GM12878 (cell line): ENCODE measurements at regions of chr14 and their contacts with region 1.

Region 1: DNA sequence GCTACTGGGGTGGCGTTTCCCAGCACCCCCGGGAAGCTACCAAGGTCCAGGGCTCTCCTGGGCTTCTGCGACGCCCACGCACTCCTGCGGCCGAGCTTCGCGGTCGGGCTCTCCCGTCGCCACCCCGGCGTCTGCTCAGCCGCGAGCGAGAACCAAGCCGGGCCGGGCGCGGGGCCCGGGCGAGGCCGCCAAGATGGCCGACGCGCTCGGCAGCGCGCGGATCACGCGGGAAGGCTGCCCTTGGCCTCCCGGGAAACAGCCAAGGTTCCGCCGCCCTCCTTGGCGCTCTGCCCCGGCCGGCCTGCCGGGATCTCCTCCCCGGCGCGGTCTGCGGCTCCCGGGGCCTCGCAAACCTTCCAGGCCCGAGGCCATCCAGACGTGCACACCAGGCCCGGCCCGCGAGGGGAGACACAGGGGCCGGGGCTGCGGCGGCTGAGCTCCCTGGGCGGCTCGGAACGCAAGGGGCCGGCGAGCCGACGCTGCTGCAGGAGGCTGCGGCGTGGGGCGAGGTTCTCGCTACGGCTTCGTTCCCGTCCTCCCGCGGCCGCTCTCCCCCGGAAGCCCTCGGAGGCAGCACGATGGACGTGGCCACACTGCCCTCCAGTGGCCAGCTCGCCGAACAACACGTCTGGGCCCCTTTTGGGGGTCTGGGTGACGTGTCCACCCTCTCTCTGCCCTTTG is 23.5 kb upstream of the ZFP36L1 start:
- DNase-seq: no peak
- ATAC-seq: peak; percentile 64
- H3K4me3 ChIP-seq: peak overlapping the region; percentile 58
- H3K27ac ChIP-seq: peak overlapping the region; percentile 95
- H3K4me1 ChIP-seq: peaks cover 58% of the 10 kb centered on the region
- H3K27me3 ChIP-seq: no peaks in the 10 kb centered on the region
- CTCF ChIP-seq: peak; percentile 89 to 99 (median 92); a peak in 5 of 6 replicates
- EP300 ChIP-seq: 0 out of 4 replicates have a peak, but pooled peaks of 1 of the 2 experiments have one; percentile 12
- POLR2A ChIP-seq: peak; percentile 80
- RAD21 ChIP-seq: peak; percentile 92

Region 2: DNA sequence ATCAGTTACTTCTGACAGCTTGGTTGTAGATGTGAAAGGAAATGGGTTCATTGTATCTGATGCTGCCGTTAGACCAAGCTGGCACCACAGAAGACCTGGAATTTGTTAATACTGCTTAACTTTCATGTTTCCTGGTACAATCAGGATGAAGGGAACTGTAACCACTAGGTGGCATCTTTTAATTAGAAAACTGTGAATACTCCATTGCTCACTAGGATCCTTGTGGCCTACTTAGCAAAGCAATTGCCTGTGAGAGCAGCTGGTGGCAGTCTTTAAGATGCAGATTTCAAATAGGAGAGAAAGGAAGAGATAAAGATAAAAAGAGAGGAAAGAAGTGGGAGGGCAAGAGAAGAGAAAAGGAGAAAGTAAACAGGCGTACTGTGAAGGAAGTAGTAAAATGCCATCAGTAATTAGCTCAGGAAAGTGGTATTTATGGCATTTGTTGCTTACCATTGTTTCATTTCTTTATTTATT is 882.4 kb before region 1 on chr14:
- CTCF ChIA-PET with region 1: interaction called, 8 read pairs
- POLR2A ChIA-PET with region 1: no interaction called
- RAD21 ChIA-PET with region 1: interaction called, 8 read pairs
- SMC1A ChIA-PET with region 1: interaction called, 25 read pairs
- in situ Hi-C with region 1: loop called (anchors 10 kb)
- intact Hi-C with region 1: no loop called
- DNase-seq: peak; percentile 42
- ATAC-seq: peak; percentile 98
- H3K4me3 ChIP-seq: no peak overlapping the region
- H3K27ac ChIP-seq: no peak overlapping the region
- H3K4me1 ChIP-seq: no peaks in the 10 kb centered on the region
- H3K27me3 ChIP-seq: no peaks in the 10 kb centered on the region
- CTCF ChIP-seq: peak; percentile 46 to 65 (median 62)
- EP300 ChIP-seq: no peak
- POLR2A ChIP-seq: no peak
- RAD21 ChIP-seq: peak; percentile 76

Region 3: DNA sequence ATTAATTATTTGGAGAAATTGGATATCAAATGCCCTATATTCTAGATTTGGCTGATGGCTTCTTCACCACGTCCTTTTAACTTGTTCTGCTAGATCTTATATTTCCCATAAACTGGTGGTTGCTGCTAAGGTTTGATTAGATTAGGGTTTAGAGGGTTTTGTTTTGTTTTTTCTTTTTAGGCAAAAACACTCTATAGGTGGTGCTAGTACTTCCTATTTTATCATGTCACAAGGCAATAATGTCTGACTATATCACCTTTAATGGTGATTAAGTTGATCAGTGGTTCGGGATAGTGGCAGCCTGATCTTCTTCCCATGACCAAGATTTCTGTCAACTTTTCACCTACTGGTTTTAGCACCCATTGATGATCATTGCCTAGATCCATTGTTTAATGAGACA is 541.7 kb before region 1 on chr14:
- CTCF ChIA-PET with region 1: interaction called, 21 read pairs
- POLR2A ChIA-PET with region 1: interaction called, 6 read pairs
- RAD21 ChIA-PET with region 1: interaction called, 39 read pairs
- SMC1A ChIA-PET with region 1: interaction called, 24 read pairs
- in situ Hi-C with region 1: no loop called
- intact Hi-C with region 1: no loop called
- DNase-seq: no peak
- ATAC-seq: no peak
- H3K4me3 ChIP-seq: no peak overlapping the region
- H3K27ac ChIP-seq: peak overlapping the region; percentile 91
- H3K4me1 ChIP-seq: peaks cover 78% of the 10 kb centered on the region
- H3K27me3 ChIP-seq: no peaks in the 10 kb centered on the region
- CTCF ChIP-seq: peak in 1 of 3 experiments; percentile 22; a peak in 1 of 6 replicates
- EP300 ChIP-seq: no peak
- POLR2A ChIP-seq: no peak
- RAD21 ChIP-seq: 0 out of 2 replicates have a peak, but pooled peaks have one; percentile 21

Region 4: DNA sequence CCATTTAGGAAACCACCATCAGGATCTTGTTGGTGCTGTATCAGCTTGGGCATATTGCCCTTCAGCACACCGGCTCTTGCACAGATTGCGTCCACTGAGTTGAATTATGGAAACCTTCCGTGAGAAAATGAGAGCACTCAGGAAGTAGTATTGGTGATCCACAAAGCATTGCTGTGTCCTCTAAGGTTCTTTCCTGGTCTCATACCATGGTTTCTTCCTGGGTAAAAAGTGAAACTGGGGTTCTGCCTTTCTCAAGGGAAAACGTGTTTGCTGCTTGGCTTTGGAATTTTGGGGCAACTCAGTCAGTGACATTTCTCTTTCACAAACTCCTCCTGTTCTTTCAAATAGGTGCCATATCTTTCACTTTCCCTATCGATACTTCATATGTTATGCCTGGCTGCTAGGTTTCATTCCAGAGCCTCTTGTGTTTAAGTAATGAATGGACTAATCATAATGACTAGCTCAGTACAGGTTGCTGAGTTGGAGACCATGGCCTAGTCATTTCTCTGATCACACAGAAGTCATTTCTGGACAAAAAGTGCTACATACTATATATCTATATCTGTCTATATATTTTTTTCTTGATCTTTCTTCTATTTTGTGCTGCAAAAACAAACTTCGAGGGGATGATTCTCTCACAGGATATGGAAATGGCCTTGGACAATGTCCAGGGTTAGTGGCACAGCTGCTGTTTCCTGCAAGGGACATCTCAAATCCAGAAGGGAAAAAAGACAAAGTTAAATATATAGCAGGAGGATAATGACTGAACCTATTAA is 446.9 kb before region 1 on chr14:
- CTCF ChIA-PET with region 1: interaction called, 10 read pairs
- POLR2A ChIA-PET with region 1: interaction called, 4 read pairs
- RAD21 ChIA-PET with region 1: interaction called, 9 read pairs
- SMC1A ChIA-PET with region 1: interaction called, 16 read pairs
- in situ Hi-C with region 1: no loop called
- intact Hi-C with region 1: no loop called
- DNase-seq: peak; percentile 85
- ATAC-seq: peak; percentile 83
- H3K4me3 ChIP-seq: peak overlapping the region; percentile 24; the same call in 1 of the 2 replicates
- H3K27ac ChIP-seq: peak overlapping the region; percentile 94
- H3K4me1 ChIP-seq: peaks cover 55% of the 10 kb centered on the region
- H3K27me3 ChIP-seq: no peaks in the 10 kb centered on the region
- CTCF ChIP-seq: no peak
- EP300 ChIP-seq: no peak
- POLR2A ChIP-seq: no peak
- RAD21 ChIP-seq: 0 out of 2 replicates have a peak, but pooled peaks have one; percentile 20

Region 5: DNA sequence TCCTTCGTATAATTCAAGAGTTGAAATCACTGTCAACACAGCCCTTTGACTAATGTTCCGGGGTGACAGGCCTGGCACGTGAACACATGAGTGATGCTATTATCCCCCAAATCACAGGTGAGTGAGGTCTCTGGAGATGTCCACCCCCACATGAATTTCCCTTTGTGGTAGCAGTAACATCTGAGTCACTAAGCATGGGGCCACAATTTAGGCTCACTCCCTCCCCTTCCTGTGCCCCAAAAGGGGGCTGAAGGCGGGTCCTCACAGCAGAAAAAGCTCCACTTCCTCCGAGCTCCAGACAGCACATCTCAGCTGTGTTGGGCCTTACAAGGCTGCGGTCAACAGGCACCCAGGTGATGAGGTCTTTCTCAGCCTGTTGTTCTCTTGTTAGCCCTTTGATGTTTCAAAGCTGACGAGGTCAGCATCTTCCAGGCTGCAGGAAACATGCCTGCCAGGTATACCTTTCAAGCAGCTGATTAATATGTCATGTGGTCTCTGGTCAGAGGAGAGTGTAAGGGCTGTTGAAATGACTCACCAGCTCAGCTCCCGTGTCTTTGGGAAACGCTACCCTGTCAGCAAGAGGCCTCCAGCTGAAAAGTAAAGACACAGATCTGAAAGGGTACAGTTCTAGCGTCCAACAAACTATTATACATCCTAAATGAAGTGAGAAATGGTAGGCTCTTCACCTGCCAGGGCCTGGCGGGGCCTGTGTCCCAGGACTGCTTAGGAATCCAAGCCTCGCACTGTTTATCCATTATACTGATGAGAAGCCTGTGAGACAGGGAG is 130.8 kb before region 1 on chr14:
- CTCF ChIA-PET with region 1: no interaction called
- POLR2A ChIA-PET with region 1: interaction called, 4 read pairs
- RAD21 ChIA-PET with region 1: interaction called, 15 read pairs
- SMC1A ChIA-PET with region 1: interaction called, 8 read pairs
- in situ Hi-C with region 1: no loop called
- intact Hi-C with region 1: no loop called
- DNase-seq: peak; percentile 89
- ATAC-seq: peak; percentile 90
- H3K4me3 ChIP-seq: no peak overlapping the region
- H3K27ac ChIP-seq: peak overlapping the region; percentile 67
- H3K4me1 ChIP-seq: peaks cover 48% of the 10 kb centered on the region
- H3K27me3 ChIP-seq: no peaks in the 10 kb centered on the region
- CTCF ChIP-seq: no peak
- EP300 ChIP-seq: peak in 1 of 2 experiments; percentile 85; a peak in 3 of 4 replicates
- POLR2A ChIP-seq: peak; percentile 62
- RAD21 ChIP-seq: 0 out of 2 replicates have a peak, but pooled peaks have one; percentile 0

Region 6: DNA sequence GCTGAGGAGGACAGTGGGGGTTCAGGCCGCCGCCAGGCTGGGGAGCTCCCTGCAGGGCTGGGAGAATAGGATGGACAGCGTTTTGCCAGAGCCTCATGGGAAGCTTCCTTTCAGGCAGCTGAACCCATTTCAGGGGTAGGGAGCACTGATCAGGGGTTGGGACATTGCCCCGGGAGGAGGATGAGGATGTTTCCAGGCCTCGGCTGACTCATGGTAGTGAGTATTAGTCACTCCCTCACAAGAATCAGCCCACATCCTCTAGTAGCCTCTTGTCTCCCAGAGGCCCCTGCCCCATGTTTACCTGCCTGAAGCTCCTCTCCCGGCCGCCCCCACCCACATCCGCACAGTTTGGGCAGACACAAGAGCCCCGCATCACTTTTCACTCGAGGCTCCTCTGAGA is 113.3 kb before region 1 on chr14:
- CTCF ChIA-PET with region 1: no interaction called
- POLR2A ChIA-PET with region 1: no interaction called
- RAD21 ChIA-PET with region 1: no interaction called
- SMC1A ChIA-PET with region 1: no interaction called
- in situ Hi-C with region 1: no loop called
- intact Hi-C with region 1: no loop called
- DNase-seq: no peak
- ATAC-seq: no peak
- H3K4me3 ChIP-seq: no peak overlapping the region
- H3K27ac ChIP-seq: no peak overlapping the region
- H3K4me1 ChIP-seq: no peaks in the 10 kb centered on the region
- H3K27me3 ChIP-seq: no peaks in the 10 kb centered on the region
- CTCF ChIP-seq: no peak
- EP300 ChIP-seq: no peak
- POLR2A ChIP-seq: no peak
- RAD21 ChIP-seq: no peak

Region 7: GRCh38 chr14:69117020-69117767 is 300.8 kb after region 1 on chr14:
- CTCF ChIA-PET with region 1: no interaction called
- POLR2A ChIA-PET with region 1: no interaction called
- RAD21 ChIA-PET with region 1: no interaction called
- SMC1A ChIA-PET with region 1: no interaction called
- in situ Hi-C with region 1: no loop called
- intact Hi-C with region 1: no loop called
- DNase-seq: no peak
- ATAC-seq: no peak
- H3K4me3 ChIP-seq: no peak overlapping the region
- H3K27ac ChIP-seq: no peak overlapping the region
- H3K4me1 ChIP-seq: no peaks in the 10 kb centered on the region
- H3K27me3 ChIP-seq: no peaks in the 10 kb centered on the region
- CTCF ChIP-seq: no peak
- EP300 ChIP-seq: no peak
- POLR2A ChIP-seq: no peak
- RAD21 ChIP-seq: no peak